K562 (cell line): ENCODE measurements at regions of chr1 and their contacts with region 1.

Region 1: DNA sequence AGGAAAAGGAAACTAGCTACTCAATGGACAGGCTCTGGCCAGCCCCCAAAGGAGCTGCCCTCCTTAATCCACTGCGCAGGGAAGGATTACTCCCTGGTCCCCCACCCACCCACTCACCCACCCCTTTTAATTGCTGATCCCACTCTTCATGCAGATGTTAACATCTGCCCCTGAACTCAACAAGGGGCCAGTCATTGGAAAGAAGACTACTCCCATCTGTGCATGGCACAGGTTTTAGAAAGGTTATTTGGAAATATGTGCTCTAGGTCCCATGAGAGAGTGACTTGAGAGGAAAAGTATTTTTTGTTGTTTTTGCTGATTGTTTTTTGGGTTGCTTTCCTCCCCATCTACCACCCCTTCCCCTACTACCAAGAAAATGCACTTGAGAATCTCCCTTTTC is 94.4 kb upstream of the FGGY start:
- DNase-seq: no peak
- ATAC-seq: no peak
- H3K4me3 ChIP-seq: no peak overlapping the region
- H3K27ac ChIP-seq: no peak overlapping the region
- H3K4me1 ChIP-seq: no peaks in the 10 kb centered on the region
- H3K27me3 ChIP-seq: peaks cover 0 to 5% of the 10 kb centered on the region in 2 experiments; a peak in 2 of 5 replicates
- CTCF ChIP-seq: no peak
- EP300 ChIP-seq: no peak
- POLR2A ChIP-seq: no peak
- RAD21 ChIP-seq: no peak

Region 2: DNA sequence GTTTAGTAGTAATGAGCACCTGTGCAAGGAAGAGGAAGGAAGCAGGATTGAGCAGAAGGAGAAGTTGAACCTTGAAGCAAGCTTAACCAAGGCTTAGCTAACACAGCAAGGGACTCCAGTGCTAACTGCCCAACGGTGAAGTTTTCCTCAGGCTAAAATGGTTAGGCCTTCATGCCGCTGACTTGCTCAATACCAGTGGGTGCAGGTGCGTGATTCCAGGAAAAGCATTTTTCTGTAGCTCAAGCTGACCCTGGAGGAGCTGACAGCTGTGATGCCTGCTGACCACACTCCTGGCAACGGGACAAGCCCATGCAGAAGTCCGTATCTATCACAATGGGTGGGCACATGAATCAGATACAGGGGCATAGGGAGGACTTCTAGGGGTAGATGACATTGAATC is 17.9 kb after region 1 on chr1:
- CTCF ChIA-PET with region 1: no interaction called
- POLR2A ChIA-PET with region 1: no interaction called
- in situ Hi-C with region 1: no loop called
- intact Hi-C with region 1: no loop called
- DNase-seq: no peak
- ATAC-seq: no peak
- H3K4me3 ChIP-seq: no peak overlapping the region
- H3K27ac ChIP-seq: no peak overlapping the region
- H3K4me1 ChIP-seq: peaks cover 0 to 2% of the 10 kb centered on the region in 2 experiments; a peak in 1 of 5 replicates
- H3K27me3 ChIP-seq: no peaks in the 10 kb centered on the region
- CTCF ChIP-seq: no peak
- EP300 ChIP-seq: no peak
- POLR2A ChIP-seq: no peak
- RAD21 ChIP-seq: no peak

Region 3: GRCh38 chr1:59272507-59272906 is 70.1 kb after region 1 on chr1:
- CTCF ChIA-PET with region 1: no interaction called
- POLR2A ChIA-PET with region 1: no interaction called
- in situ Hi-C with region 1: no loop called
- intact Hi-C with region 1: loop called (anchors 2 kb)
- DNase-seq: no peak
- ATAC-seq: no peak
- H3K4me3 ChIP-seq: no peak overlapping the region
- H3K27ac ChIP-seq: no peak overlapping the region
- H3K4me1 ChIP-seq: no peaks in the 10 kb centered on the region
- H3K27me3 ChIP-seq: 0 out of 5 replicates have a peak, but pooled peaks cover 0 to 4% of the 10 kb centered on the region in 2 experiments
- CTCF ChIP-seq: no peak
- EP300 ChIP-seq: no peak
- POLR2A ChIP-seq: no peak
- RAD21 ChIP-seq: no peak

Region 4: DNA sequence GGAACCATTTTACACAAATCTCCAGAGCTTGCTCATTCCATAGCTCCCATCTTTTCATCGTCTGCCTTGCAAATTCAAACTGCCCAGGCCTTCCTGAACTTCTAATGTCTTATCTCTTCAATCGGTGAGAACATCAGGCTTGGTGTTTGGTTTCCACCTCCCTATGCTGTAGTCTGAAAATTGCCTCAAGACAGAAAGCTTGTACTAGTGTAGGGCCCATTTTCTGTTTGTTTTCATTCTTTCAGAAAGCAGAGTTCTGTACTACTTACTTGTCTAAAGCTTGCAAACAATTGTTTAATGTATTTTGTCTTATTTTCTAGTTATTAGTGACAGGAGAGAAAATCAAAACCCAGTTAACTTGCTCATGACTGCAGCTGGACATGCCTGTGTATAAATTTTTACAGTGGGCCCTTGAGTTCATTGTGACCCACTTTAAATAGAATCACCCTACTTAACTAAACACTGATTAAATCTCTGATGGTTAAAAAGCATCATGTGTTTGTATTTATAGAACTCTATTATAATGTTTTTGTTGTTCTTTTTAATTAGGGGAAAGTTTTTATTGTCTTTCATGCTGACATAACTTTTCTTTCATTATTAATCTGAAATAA is 629.2 kb after region 1 on chr1:
- CTCF ChIA-PET with region 1: no interaction called
- POLR2A ChIA-PET with region 1: no interaction called
- in situ Hi-C with region 1: no loop called
- intact Hi-C with region 1: no loop called
- DNase-seq: no peak
- ATAC-seq: no peak
- H3K4me3 ChIP-seq: no peak overlapping the region
- H3K27ac ChIP-seq: no peak overlapping the region
- H3K4me1 ChIP-seq: no peaks in the 10 kb centered on the region
- H3K27me3 ChIP-seq: no peaks in the 10 kb centered on the region
- CTCF ChIP-seq: no peak
- EP300 ChIP-seq: no peak
- POLR2A ChIP-seq: no peak
- RAD21 ChIP-seq: no peak